Tibial artery (tissue), 4 donors: ENCODE measurements at regions of chr22 and their contacts with region 1.

Region 1: GRCh38 chr22:44625981-44626687 is 75.9 kb upstream of the PRR5 start:
- DNase-seq: peak; percentile 61 to 76
- H3K4me3 ChIP-seq: no peak overlapping the region
- H3K27ac ChIP-seq: no peak overlapping the region
- H3K4me1 ChIP-seq: no peaks in the 10 kb centered on the region
- H3K27me3 ChIP-seq: peaks cover 0 to 63% of the 10 kb centered on the region in 2 donors
- CTCF ChIP-seq: peak; percentile 99

Region 2: GRCh38 chr22:43385770-43386641 is 1240.1 kb before region 1 on chr22:
- intact Hi-C with region 1: loop called (anchors 10 kb)
- DNase-seq: peak; percentile 65 to 81
- H3K4me3 ChIP-seq: no peak overlapping the region
- H3K27ac ChIP-seq: no peak overlapping the region
- H3K4me1 ChIP-seq: peaks cover 0 to 4% (median 3%) of the 10 kb centered on the region in 4 donors
- H3K27me3 ChIP-seq: peaks cover 0 to 43% of the 10 kb centered on the region in 2 donors
- CTCF ChIP-seq: peak; percentile 86 to 92

Region 3: GRCh38 chr22:43993027-43993760 is 632.9 kb before region 1 on chr22:
- intact Hi-C with region 1: loop called (anchors 2 kb)
- DNase-seq: peak in 1 of 2 donors; percentile 32
- H3K4me3 ChIP-seq: no peak overlapping the region
- H3K27ac ChIP-seq: no peak overlapping the region
- H3K4me1 ChIP-seq: peaks cover 0 to 6% (median 0%) of the 10 kb centered on the region in 4 donors
- H3K27me3 ChIP-seq: no peaks in the 10 kb centered on the region
- CTCF ChIP-seq: peak; percentile 86 to 89

Region 4: DNA sequence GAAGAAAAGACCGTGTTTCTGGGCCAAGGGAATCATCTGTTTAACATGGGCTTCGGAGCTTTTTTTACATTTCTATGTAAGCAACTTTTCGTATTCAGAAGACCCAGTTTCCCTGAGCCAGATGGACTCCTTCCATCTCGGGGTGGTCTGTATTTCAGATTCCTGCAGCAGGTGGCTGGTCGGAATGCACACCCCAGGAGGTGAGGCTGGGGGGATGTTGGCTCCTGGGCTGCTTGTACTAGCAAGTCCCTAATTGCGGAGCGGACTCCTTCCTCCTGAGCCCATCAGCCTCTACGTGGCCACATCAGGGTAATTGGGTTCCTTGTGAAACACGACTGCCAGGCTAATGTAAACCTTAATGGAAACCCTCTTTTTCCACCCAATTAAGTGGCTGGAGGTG is 543.3 kb before region 1 on chr22:
- intact Hi-C with region 1: loop called (anchors 2 kb)
- DNase-seq: no peak
- H3K4me3 ChIP-seq: no peak overlapping the region
- H3K27ac ChIP-seq: no peak overlapping the region
- H3K4me1 ChIP-seq: peaks cover 0 to 7% (median 3%) of the 10 kb centered on the region in 4 donors
- H3K27me3 ChIP-seq: peaks cover 0 to 4% of the 10 kb centered on the region in 2 donors
- CTCF ChIP-seq: no peak